ENCODE measurements at regions of chr3 and their contacts with region 1.

Region 1: GRCh38 chr3:188749010-188749617 is 422.7 kb upstream of the TPRG1 start:
- DNase-seq: peak in 1 of 2 experiments; percentile 13
- H3K4me3 ChIP-seq: no peak overlapping the region
- H3K4me3 Mint-ChIP-seq: no peak overlapping the region
- H3K27ac Mint-ChIP-seq: no peak overlapping the region
- H3K4me1 ChIP-seq: peaks cover 47% of the 10 kb centered on the region
- H3K4me1 Mint-ChIP-seq: peaks cover 41% of the 10 kb centered on the region
- H3K27me3 ChIP-seq: no peaks in the 10 kb centered on the region
- H3K27me3 Mint-ChIP-seq: no peaks in the 10 kb centered on the region
- CTCF ChIP-seq: peak in 1 of 2 experiments; percentile 21

Region 2: GRCh38 chr3:187811585-187812250 is 937.4 kb before region 1 on chr3:
- CTCF ChIA-PET with region 1: no interaction called
- POLR2A ChIA-PET with region 1: no interaction called
- intact Hi-C with region 1: loop called (anchors 5 kb)
- DNase-seq: no peak
- H3K4me3 ChIP-seq: no peak overlapping the region
- H3K4me3 Mint-ChIP-seq: no peak overlapping the region
- H3K27ac Mint-ChIP-seq: peak overlapping the region; percentile 81
- H3K4me1 ChIP-seq: peaks cover 52% of the 10 kb centered on the region
- H3K4me1 Mint-ChIP-seq: peaks cover 30% of the 10 kb centered on the region
- H3K27me3 ChIP-seq: no peaks in the 10 kb centered on the region
- H3K27me3 Mint-ChIP-seq: no peaks in the 10 kb centered on the region
- CTCF ChIP-seq: no peak

Region 3: GRCh38 chr3:188082031-188082430 is 667.1 kb before region 1 on chr3:
- CTCF ChIA-PET with region 1: no interaction called
- POLR2A ChIA-PET with region 1: no interaction called
- intact Hi-C with region 1: loop called (anchors 1 kb)
- DNase-seq: no peak
- H3K4me3 ChIP-seq: no peak overlapping the region
- H3K4me3 Mint-ChIP-seq: no peak overlapping the region
- H3K27ac Mint-ChIP-seq: no peak overlapping the region
- H3K4me1 ChIP-seq: peaks cover 34% of the 10 kb centered on the region
- H3K4me1 Mint-ChIP-seq: peaks cover 47% of the 10 kb centered on the region
- H3K27me3 ChIP-seq: no peaks in the 10 kb centered on the region
- H3K27me3 Mint-ChIP-seq: no peaks in the 10 kb centered on the region
- CTCF ChIP-seq: no peak

Region 4: GRCh38 chr3:188389711-188390342 is 359.3 kb before region 1 on chr3:
- CTCF ChIA-PET with region 1: no interaction called
- POLR2A ChIA-PET with region 1: no interaction called
- intact Hi-C with region 1: loop called (anchors 10 kb)
- DNase-seq: no peak
- H3K4me3 ChIP-seq: no peak overlapping the region
- H3K4me3 Mint-ChIP-seq: no peak overlapping the region
- H3K27ac Mint-ChIP-seq: peak overlapping the region; percentile 73
- H3K4me1 ChIP-seq: peaks cover 39% of the 10 kb centered on the region
- H3K4me1 Mint-ChIP-seq: peaks cover 32% of the 10 kb centered on the region
- H3K27me3 ChIP-seq: no peaks in the 10 kb centered on the region
- H3K27me3 Mint-ChIP-seq: no peaks in the 10 kb centered on the region
- CTCF ChIP-seq: no peak

Region 5: DNA sequence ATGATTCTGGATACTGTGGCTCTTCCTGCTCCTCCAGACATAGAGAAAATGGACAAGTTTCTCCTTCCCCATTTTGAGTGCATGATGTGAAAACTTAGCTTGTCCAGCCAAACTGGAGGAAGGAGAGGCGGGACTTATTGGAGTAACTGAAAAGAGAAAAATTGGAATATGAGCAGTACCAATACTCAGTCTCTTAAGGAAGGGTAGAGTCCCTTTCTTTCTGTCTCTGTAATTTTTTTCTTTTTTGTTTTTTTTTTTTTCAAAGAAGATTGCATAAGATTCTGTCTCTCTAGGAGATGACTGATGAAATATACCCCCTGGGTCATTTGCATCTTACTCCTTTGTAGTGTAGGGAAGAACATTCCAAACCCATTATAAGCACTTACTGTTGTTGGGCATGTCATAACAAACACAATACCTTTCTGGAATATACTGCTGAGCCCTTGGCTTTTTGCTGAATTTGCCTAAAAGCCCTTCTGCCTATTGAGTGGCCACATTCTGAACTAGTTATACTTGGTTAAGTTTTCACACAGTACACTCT is 75.4 kb before region 1 on chr3:
- CTCF ChIA-PET with region 1: no interaction called
- POLR2A ChIA-PET with region 1: no interaction called
- intact Hi-C with region 1: loop called (anchors 1 kb)
- DNase-seq: peak in 1 of 2 experiments; percentile 56
- H3K4me3 ChIP-seq: no peak overlapping the region
- H3K4me3 Mint-ChIP-seq: no peak overlapping the region
- H3K27ac Mint-ChIP-seq: peak overlapping the region; percentile 44
- H3K4me1 ChIP-seq: peaks cover 36% of the 10 kb centered on the region
- H3K4me1 Mint-ChIP-seq: peaks cover 26% of the 10 kb centered on the region
- H3K27me3 ChIP-seq: no peaks in the 10 kb centered on the region
- H3K27me3 Mint-ChIP-seq: no peaks in the 10 kb centered on the region
- CTCF ChIP-seq: no peak

Region 6: GRCh38 chr3:188839187-188839695 is 90.1 kb after region 1 on chr3:
- CTCF ChIA-PET with region 1: interaction called, 5 read pairs
- POLR2A ChIA-PET with region 1: no interaction called
- intact Hi-C with region 1: loop called (anchors 1 kb)
- DNase-seq: peak; percentile 86 to 90
- H3K4me3 ChIP-seq: no peak overlapping the region
- H3K4me3 Mint-ChIP-seq: no peak overlapping the region
- H3K27ac Mint-ChIP-seq: peak overlapping the region; percentile 75
- H3K4me1 ChIP-seq: peaks cover 12% of the 10 kb centered on the region
- H3K4me1 Mint-ChIP-seq: peaks cover 22% of the 10 kb centered on the region
- H3K27me3 ChIP-seq: no peaks in the 10 kb centered on the region
- H3K27me3 Mint-ChIP-seq: no peaks in the 10 kb centered on the region
- CTCF ChIP-seq: no peak

Region 7: GRCh38 chr3:188954590-188955208 is 205.6 kb after region 1 on chr3:
- CTCF ChIA-PET with region 1: interaction called, 6 read pairs
- POLR2A ChIA-PET with region 1: no interaction called
- intact Hi-C with region 1: loop called (anchors 1 kb)
- DNase-seq: peak; percentile 77 to 88
- H3K4me3 ChIP-seq: no peak overlapping the region
- H3K4me3 Mint-ChIP-seq: no peak overlapping the region
- H3K27ac Mint-ChIP-seq: no peak overlapping the region
- H3K4me1 ChIP-seq: peaks cover 20% of the 10 kb centered on the region
- H3K4me1 Mint-ChIP-seq: peaks cover 12% of the 10 kb centered on the region
- H3K27me3 ChIP-seq: no peaks in the 10 kb centered on the region
- H3K27me3 Mint-ChIP-seq: no peaks in the 10 kb centered on the region
- CTCF ChIP-seq: peak; percentile 91

Measured in Caco-2 (cell line).